ENCODE measurements at regions of chr1 and their contacts with region 1.

Region 1: GRCh38 chr1:42747125-42747524 is 7.1 kb upstream of the CLDN19 start:
- DNase-seq: peak in 2 of 6 donors; percentile 40 to 45
- ATAC-seq: peak; percentile 38 to 84 (median 80)
- H3K4me3 ChIP-seq: no peak overlapping the region
- H3K27ac ChIP-seq: no peak overlapping the region
- H3K4me1 ChIP-seq: no peaks in the 10 kb centered on the region
- H3K27me3 ChIP-seq: no peaks in the 10 kb centered on the region
- CTCF ChIP-seq: peak in 2 of 4 donors; percentile 33 to 35

Region 2: DNA sequence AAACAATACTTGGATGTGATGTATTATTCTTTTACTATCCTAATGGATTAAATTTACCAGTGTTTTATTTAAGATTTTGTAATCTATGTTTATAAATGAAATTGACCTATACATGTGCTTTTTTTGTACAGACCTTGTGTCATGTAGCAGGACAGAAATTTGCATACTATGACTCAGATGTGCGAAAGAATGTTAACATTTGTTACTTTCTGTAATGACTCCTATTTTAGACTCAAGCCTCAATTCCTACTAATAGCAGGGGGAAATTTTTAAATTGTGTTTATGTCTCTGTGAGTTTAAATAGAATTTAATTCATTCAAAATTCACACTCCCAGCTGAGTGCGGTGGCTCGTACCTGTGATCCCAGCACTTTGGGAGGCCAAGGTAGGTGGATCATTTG is 388.3 kb before region 1 on chr1:
- intact Hi-C with region 1: loop called in 1 of 3 experiments (anchors 10 kb)
- DNase-seq: no peak
- ATAC-seq: no peak
- H3K4me3 ChIP-seq: no peak overlapping the region
- H3K27ac ChIP-seq: no peak overlapping the region
- H3K4me1 ChIP-seq: no peaks in the 10 kb centered on the region
- H3K27me3 ChIP-seq: peaks cover 0 to 3% (median 0%) of the 10 kb centered on the region in 4 donors
- CTCF ChIP-seq: no peak

Region 3: GRCh38 chr1:42586016-42586415 is 161.1 kb before region 1 on chr1:
- intact Hi-C with region 1: loop called in 1 of 3 experiments (anchors 10 kb)
- DNase-seq: no peak
- ATAC-seq: no peak
- H3K4me3 ChIP-seq: no peak overlapping the region
- H3K27ac ChIP-seq: no peak overlapping the region
- H3K4me1 ChIP-seq: no peaks in the 10 kb centered on the region
- H3K27me3 ChIP-seq: no peaks in the 10 kb centered on the region
- CTCF ChIP-seq: no peak